ENCODE measurements at regions of chr1 and their contacts with region 1.

Region 1: GRCh38 chr1:231442735-231443134 is 20.6 kb upstream of the EGLN1 start:
- ATAC-seq: peak in 2 of 8 experiments; percentile 94 to 100
- H3K4me3 ChIP-seq: no peak overlapping the region
- H3K27ac ChIP-seq: no peak overlapping the region
- H3K4me1 ChIP-seq: no peaks in the 10 kb centered on the region

Region 2: DNA sequence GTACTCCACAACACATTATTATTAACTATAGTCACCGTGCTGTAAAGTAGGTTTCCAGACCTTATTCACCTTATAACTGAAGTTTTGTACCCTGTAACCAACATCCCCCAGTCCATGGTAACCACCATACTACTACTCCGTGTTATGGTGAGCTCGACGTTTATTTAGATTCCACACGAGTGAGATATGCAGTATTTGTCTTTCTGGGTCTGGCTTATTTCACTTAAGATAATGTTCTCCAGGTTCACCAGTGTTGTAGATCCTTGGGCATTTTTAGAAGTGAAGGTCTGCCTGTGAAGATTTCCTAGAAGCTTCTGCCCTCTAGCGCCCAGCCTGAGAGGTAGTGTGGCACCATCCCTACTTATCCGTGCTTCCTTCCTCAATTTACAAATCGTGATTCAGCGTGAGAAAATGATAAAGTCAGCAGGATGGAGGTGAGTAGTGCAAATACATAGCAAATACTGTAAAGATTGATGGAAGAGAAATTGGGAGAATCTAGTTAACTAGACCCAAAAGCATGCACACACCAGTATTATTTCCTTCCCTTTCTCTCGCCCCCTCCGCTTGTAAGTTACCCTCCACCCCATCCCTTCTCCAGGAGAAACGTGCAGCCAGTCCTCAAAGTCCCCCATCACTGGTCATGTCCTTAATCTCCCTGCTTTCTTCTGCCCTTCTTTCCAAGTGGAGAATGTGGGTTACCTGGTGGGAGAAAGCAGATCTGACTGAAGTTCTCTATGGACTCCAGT is 147.9 kb after region 1 on chr1:
- in situ Hi-C with region 1: loop called in 1 of 9 experiments (anchors 25 kb)
- ATAC-seq: peak in 5 of 8 experiments; percentile 46 to 99 (median 99)
- H3K4me3 ChIP-seq: no peak overlapping the region
- H3K27ac ChIP-seq: no peak overlapping the region
- H3K4me1 ChIP-seq: no peaks in the 10 kb centered on the region

Measured in motor neuron (in vitro differentiated cells).